A673 (cell line): ENCODE measurements at regions of chr17 and their contacts with region 1.

Region 1: GRCh38 chr17:7687908-7688807 is at the start of gene WRAP53:
- DNase-seq: peak; percentile 100
- H3K4me3 ChIP-seq: peak within 1 kb of the TSS; percentile 91
- H3K27ac ChIP-seq: peak within 1 kb of the TSS; percentile 99
- H3K4me1 ChIP-seq: peaks cover 20% of the 10 kb centered on the region
- H3K27me3 ChIP-seq: no peaks in the 10 kb centered on the region
- CTCF ChIP-seq: peak; percentile 100
- total RNA-seq, gene WRAP53: 42.2 and 51.8 TPM in 2 replicates

Region 2: DNA sequence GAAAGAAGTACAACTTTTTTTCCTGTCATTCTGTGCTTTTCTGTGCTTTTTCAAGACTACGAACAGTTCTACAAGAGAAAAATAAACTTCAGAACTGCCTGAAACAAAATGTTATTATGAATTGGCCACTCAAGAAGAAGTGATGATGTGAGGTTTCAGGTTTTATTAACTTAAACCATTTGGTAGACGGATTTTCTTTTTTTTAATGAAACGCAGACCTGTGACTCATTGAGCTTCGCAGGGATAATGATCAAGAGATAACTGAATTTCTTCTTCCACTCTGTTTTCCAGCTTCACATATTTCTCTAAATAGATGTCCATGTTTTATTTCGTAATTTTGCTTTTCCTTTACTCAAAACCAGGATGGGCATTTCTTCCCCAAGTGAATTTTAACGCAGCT is 1285.9 kb before region 1 on chr17:
- CTCF ChIA-PET with region 1: no interaction called
- POLR2A ChIA-PET with region 1: no interaction called
- intact Hi-C with region 1: no loop called
- DNase-seq: no peak
- H3K4me3 ChIP-seq: no peak overlapping the region
- H3K27ac ChIP-seq: no peak overlapping the region
- H3K4me1 ChIP-seq: no peaks in the 10 kb centered on the region
- H3K27me3 ChIP-seq: peaks cover 61% of the 10 kb centered on the region
- CTCF ChIP-seq: no peak

Region 3: DNA sequence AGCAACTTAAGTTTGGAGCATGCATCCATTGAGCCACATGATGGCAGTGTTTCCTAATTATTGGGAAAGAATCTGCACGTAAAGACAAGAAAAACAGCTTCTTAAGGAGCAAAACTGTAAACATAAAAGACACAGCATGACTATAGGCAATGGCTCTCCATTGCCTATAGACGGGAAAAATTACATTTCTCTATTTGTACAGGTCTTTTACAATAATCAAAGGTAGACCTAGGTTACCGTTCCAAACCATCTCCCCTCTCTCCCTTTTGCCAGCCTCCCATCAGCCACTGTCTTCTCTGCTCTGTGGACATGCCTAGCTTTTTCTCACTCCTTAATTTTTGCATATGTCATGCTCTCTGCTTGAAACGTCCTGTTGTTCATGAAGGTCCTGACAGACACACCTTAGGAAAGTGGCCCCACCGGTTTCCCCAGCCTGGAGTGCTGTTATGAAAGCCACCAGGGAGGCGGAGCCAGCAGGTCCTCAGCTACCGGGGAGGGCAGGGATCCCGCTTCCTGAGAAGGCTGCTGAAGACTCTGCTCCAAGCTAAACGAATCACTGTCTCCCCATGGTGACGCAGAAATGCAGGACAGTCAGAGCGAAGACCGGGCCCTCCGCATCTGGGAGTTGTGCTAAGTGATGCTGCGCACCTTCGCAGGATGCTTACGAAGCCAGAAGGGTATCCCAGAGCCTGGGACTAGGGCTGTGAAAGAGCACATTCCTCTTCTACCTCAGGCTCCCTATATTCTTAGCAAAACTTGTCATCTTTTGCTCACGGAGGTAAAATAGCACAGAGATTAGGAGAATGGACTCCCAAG is 642.0 kb before region 1 on chr17:
- CTCF ChIA-PET with region 1: no interaction called
- POLR2A ChIA-PET with region 1: no interaction called
- intact Hi-C with region 1: loop called (anchors 10 kb)
- DNase-seq: peak; percentile 86
- H3K4me3 ChIP-seq: peak overlapping the region; percentile 9
- H3K27ac ChIP-seq: no peak overlapping the region
- H3K4me1 ChIP-seq: peaks cover 20% of the 10 kb centered on the region
- H3K27me3 ChIP-seq: no peaks in the 10 kb centered on the region
- CTCF ChIP-seq: peak; percentile 89

Region 4: DNA sequence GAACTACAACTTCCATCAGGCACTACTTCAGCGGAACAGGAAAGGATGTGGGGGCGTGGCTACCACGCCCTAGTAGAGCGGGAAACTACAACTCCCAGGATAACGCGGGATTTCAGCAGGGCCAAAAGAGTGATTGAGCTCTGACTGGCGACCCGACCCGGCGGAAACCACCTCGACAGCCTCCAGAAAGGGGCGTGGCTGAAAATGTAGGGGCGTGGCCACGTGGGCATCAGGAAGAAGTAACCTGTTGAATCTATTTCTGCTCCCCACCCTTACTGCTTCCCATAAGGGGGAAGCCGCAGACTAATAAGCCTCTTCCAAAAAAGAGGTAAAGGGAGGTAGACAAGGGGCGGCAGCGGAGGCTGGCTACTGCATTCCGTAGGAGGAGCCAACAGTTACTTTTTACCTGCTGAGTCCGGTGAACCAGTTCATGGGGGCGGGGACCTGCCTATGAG is 252.9 kb before region 1 on chr17 and contains the start of gene TMEM102:
- CTCF ChIA-PET with region 1: no interaction called
- POLR2A ChIA-PET with region 1: no interaction called
- intact Hi-C with region 1: loop called (anchors 5 kb)
- DNase-seq: peak; percentile 99
- H3K4me3 ChIP-seq: peak within 1 kb of the TSS; percentile 90
- H3K27ac ChIP-seq: peak within 1 kb of the TSS; percentile 41
- H3K4me1 ChIP-seq: peaks cover 30% of the 10 kb centered on the region
- H3K27me3 ChIP-seq: no peaks in the 10 kb centered on the region
- CTCF ChIP-seq: no peak
- total RNA-seq, gene TMEM102: 3.2 and 4.7 TPM in 2 replicates

Region 5: GRCh38 chr17:7583253-7584109 is 104.7 kb before region 1 on chr17 and contains the start of gene MPDU1:
- CTCF ChIA-PET with region 1: interaction called, 5 read pairs
- POLR2A ChIA-PET with region 1: interaction called, 12 read pairs
- intact Hi-C with region 1: loop called (anchors 5 kb)
- DNase-seq: peak; percentile 99
- H3K4me3 ChIP-seq: peak within 1 kb of the TSS; percentile 60
- H3K27ac ChIP-seq: peak within 1 kb of the TSS; percentile 99
- H3K4me1 ChIP-seq: peaks cover 50% of the 10 kb centered on the region
- H3K27me3 ChIP-seq: no peaks in the 10 kb centered on the region
- CTCF ChIP-seq: no peak
- total RNA-seq, gene MPDU1: 133 and 149 TPM in 2 replicates

Region 6: DNA sequence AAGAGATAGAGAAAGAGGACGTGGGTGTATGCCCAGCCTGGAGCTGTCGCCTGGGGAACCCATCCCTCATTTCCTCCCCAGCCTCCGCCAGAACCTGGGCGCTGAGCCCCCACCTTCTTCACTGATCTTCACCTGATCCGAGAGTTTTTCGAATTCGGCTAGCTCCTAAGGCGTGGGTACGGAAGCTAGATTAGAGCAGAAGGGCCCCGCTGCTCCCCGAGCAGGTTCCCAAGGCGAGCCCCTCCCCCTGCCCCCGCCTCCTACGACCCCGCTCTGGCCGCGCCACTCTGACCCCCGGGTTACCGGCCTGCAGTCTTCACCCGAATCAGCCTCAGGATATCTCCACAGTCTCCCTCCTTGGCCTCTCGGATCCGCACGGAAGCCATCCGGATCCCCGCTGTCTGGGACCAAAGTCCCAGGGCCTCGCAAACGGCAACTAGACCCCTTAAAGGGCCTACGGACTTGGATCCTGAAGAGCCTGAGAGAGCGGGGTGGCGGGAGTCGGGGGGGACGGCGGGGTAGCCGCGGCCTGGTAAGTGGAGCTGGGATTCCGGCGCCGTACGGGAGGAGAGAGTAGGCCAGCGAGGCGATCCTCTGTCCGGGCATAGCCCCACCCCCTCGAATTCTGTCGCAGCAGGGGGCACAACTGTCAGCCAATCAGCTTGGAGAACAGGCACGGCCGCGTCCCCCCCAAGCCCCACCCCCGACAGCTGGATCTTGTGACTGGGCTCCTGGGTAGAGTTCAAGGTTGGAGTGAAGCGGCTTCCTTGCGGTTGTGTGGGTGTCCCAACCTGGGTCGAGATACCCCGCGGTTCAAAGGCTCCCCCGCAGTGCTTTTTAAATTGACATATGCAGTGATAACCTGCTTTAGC is 60.7 kb before region 1 on chr17 and contains the start of gene SAT2:
- CTCF ChIA-PET with region 1: interaction called, 5 read pairs
- POLR2A ChIA-PET with region 1: no interaction called
- intact Hi-C with region 1: loop called (anchors 5 kb)
- DNase-seq: peak; percentile 97
- H3K4me3 ChIP-seq: peak within 1 kb of the TSS; percentile 94
- H3K27ac ChIP-seq: peak within 1 kb of the TSS; percentile 95
- H3K4me1 ChIP-seq: no peaks in the 10 kb centered on the region
- H3K27me3 ChIP-seq: no peaks in the 10 kb centered on the region
- CTCF ChIP-seq: no peak
- total RNA-seq, gene SAT2: 61.7 and 79.3 TPM in 2 replicates

Region 7: GRCh38 chr17:7897773-7898172 is 209.6 kb after region 1 on chr17:
- CTCF ChIA-PET with region 1: no interaction called
- POLR2A ChIA-PET with region 1: no interaction called
- intact Hi-C with region 1: no loop called
- DNase-seq: peak; percentile 60
- H3K4me3 ChIP-seq: no peak overlapping the region
- H3K27ac ChIP-seq: no peak overlapping the region
- H3K4me1 ChIP-seq: no peaks in the 10 kb centered on the region
- H3K27me3 ChIP-seq: no peaks in the 10 kb centered on the region
- CTCF ChIP-seq: peak; percentile 55

Region 8: DNA sequence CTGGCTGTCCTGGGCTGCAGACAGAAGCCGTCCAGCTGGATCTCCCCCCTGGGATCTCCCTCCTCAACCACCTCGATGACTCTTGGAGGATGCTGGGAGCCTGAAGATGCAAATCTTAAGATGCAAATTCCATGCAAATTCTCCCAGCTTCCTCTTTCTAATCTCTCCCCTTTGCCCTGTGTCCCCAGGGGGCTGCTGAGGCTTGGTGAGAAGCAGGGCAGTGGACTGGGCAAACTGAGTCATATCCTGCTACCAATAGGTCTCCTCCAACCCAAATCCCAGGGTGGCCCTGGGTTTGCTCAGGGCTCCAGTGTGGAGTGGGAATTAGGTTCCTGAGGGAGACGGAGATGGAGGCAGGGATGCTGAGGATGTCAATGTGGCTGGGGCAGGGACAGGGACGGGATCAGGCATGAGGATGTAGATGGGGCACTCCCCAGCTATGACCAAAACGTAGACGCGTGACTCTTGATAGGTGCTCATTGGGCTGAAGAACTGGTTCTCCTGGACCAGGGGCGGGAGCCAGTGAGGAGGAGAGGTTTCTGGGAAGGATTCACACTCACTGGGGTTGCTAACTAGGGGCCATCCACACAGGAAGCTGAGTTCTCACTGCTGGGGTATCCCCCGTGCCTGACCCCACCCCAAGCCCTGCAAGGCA is 403.0 kb after region 1 on chr17:
- CTCF ChIA-PET with region 1: no interaction called
- POLR2A ChIA-PET with region 1: no interaction called
- intact Hi-C with region 1: no loop called
- DNase-seq: no peak
- H3K4me3 ChIP-seq: no peak overlapping the region
- H3K27ac ChIP-seq: no peak overlapping the region
- H3K4me1 ChIP-seq: no peaks in the 10 kb centered on the region
- H3K27me3 ChIP-seq: peaks cover 14% of the 10 kb centered on the region
- CTCF ChIP-seq: no peak

Region 9: GRCh38 chr17:8248751-8249607 is 560.8 kb after region 1 on chr17 and contains the start of gene PFAS:
- CTCF ChIA-PET with region 1: no interaction called
- POLR2A ChIA-PET with region 1: interaction called, 16 read pairs
- intact Hi-C with region 1: no loop called
- DNase-seq: peak; percentile 96
- H3K4me3 ChIP-seq: peak within 1 kb of the TSS; percentile 83
- H3K27ac ChIP-seq: peak within 1 kb of the TSS; percentile 97
- H3K4me1 ChIP-seq: peaks cover 10% of the 10 kb centered on the region
- H3K27me3 ChIP-seq: no peaks in the 10 kb centered on the region
- CTCF ChIP-seq: no peak
- total RNA-seq, gene PFAS: 163 and 165 TPM in 2 replicates